MCF 10A (cell line): ENCODE measurements at regions of chr3 and their contacts with region 1.

Region 1: DNA sequence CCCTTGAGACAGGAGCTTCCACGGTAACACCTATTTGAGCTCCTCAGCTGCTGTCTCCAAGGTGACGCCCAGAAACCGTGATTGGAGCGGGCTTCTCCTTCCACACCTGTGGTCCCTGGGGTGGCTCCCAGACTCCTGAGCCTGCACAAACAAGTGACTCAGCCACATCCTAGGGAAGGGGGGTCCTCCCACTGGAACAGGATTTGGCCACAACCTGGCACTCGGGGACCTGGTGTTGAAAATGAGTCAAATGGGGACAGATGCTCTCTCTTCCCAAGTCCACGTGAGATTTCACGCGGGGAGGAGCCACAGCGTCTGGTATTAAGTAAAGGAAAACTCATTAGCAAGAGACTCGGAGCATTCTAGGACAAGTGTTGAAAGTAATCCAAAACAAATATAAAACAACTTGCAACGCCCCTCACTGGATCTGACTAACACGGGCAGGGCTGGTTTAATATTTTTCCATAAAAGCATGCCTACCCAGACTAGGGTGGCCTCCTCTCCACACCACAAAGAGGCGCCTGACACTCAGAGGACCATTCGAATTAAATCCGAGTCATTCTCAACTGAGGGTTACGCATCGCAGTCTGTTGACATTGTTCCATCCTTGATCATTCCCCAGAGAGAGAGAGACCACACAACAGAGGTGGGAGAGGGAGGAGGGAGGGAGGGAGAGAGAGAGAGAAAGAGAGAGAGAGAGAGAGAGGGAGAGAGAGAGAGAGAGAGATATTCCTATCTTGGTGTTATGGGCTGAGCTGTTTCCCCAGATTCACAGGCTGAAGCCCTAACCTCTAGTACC is 74.4 kb downstream of the MGLL start:
- DNase-seq: peak; percentile 78
- H3K4me3 Mint-ChIP-seq: peak overlapping the region; percentile 11
- H3K27ac Mint-ChIP-seq: peak overlapping the region; percentile 49
- H3K4me1 Mint-ChIP-seq: peaks cover 46% of the 10 kb centered on the region
- H3K27me3 Mint-ChIP-seq: no peaks in the 10 kb centered on the region
- CTCF ChIP-seq: no peak

Region 2: DNA sequence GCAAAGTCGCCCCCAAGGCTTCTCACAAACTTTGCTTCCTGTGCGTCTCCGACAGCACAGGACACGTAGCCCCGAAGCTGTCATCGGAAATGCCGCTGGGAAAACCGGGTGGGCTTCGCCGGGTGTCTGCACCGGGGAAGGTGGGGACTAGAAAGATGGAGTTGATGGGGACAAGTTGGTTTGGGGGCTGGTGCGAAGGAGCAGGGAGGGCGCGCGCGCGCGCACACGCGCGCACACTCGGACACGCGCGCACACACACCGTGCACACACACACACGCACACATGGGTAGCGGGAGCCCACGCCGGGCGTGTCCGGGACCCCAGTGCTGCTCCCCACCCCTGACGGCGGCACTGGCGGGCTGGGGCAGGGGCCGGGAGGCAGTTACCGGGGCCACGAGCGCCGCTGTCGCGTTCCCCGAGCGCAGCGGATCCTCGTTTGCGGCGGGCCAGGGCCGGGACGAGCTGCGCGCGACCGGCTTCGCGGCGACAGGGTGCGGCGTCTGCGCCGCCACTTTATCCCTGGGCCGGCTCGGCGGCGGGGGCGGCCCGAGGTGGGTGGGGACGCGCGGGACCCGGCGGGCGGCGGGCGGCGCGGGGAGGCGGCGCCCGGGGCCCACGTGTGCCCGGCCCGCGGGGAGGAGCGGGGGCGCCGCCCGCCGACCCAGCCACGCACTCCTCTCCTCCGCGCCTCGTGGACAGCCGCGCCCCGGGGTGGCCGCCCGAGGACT is 74.9 kb after region 1 on chr3:
- CTCF ChIA-PET with region 1: interaction called, 3 read pairs
- POLR2A ChIA-PET with region 1: interaction called, 4 read pairs
- intact Hi-C with region 1: loop called (anchors 2 kb)
- DNase-seq: no peak
- H3K4me3 Mint-ChIP-seq: peak overlapping the region; percentile 90
- H3K27ac Mint-ChIP-seq: no peak overlapping the region
- H3K4me1 Mint-ChIP-seq: peaks cover 29% of the 10 kb centered on the region
- H3K27me3 Mint-ChIP-seq: no peaks in the 10 kb centered on the region
- CTCF ChIP-seq: no peak